B cell (primary cell): ENCODE measurements at regions of chr1 and their contacts with region 1.

Region 1: GRCh38 chr1:107142140-107142542 is 1.3 kb downstream of the NTNG1 start:
- DNase-seq: peak; percentile 57
- ATAC-seq: no peak
- H3K4me3 ChIP-seq: peak overlapping the region; percentile 39 to 75 (median 56)
- H3K4me3 Mint-ChIP-seq: peak overlapping the region; percentile 95
- H3K27ac ChIP-seq: no peak overlapping the region
- H3K27ac Mint-ChIP-seq: no peak overlapping the region
- H3K4me1 ChIP-seq: peaks cover 18 to 20% of the 10 kb centered on the region in 2 donors
- H3K4me1 Mint-ChIP-seq: peaks cover 21% of the 10 kb centered on the region
- H3K27me3 ChIP-seq: peaks cover 0 to 27% (median 18%) of the 10 kb centered on the region in 4 experiments
- H3K27me3 Mint-ChIP-seq: peaks cover 23% of the 10 kb centered on the region
- CTCF ChIP-seq: peak; percentile 96

Region 2: DNA sequence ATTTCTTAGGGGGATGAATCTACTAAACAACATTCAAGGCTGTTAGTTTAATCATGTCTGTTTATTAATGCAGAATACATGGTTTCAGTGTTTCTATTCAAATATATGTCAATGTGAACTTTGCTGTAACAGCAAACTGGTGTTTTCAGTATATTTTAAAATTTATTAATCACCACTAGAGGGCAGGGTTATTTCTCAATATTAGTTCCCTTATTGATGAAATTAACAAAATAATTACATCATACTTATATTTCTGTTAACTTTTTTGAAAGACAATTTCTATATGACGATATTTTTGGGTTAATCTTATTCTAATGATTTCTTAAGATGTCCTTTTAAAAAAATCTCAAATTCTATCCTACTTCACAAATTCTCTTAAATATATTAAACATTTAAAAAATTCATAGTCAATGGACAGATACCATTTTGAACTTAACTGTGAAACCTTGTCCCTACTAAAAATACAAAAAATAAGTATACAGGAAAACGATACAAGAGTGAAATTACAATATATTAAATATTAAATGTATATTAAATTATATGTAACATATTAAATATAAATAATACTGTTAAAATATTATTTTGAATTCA is 1119.7 kb before region 1 on chr1:
- CTCF ChIA-PET with region 1: no interaction called
- POLR2A ChIA-PET with region 1: no interaction called
- intact Hi-C with region 1: loop called (anchors 5 kb)
- DNase-seq: no peak
- ATAC-seq: no peak
- H3K4me3 ChIP-seq: no peak overlapping the region
- H3K4me3 Mint-ChIP-seq: no peak overlapping the region
- H3K27ac ChIP-seq: no peak overlapping the region
- H3K27ac Mint-ChIP-seq: no peak overlapping the region
- H3K4me1 ChIP-seq: no peaks in the 10 kb centered on the region
- H3K4me1 Mint-ChIP-seq: peaks cover 2% of the 10 kb centered on the region
- H3K27me3 ChIP-seq: no peaks in the 10 kb centered on the region
- H3K27me3 Mint-ChIP-seq: no peaks in the 10 kb centered on the region
- CTCF ChIP-seq: peak; percentile 69

Region 3: GRCh38 chr1:106831511-106831910 is 310.6 kb before region 1 on chr1:
- CTCF ChIA-PET with region 1: no interaction called
- POLR2A ChIA-PET with region 1: no interaction called
- intact Hi-C with region 1: no loop called
- DNase-seq: no peak
- ATAC-seq: no peak
- H3K4me3 ChIP-seq: no peak overlapping the region
- H3K4me3 Mint-ChIP-seq: no peak overlapping the region
- H3K27ac ChIP-seq: no peak overlapping the region
- H3K27ac Mint-ChIP-seq: no peak overlapping the region
- H3K4me1 ChIP-seq: no peaks in the 10 kb centered on the region
- H3K4me1 Mint-ChIP-seq: no peaks in the 10 kb centered on the region
- H3K27me3 ChIP-seq: no peaks in the 10 kb centered on the region
- H3K27me3 Mint-ChIP-seq: no peaks in the 10 kb centered on the region
- CTCF ChIP-seq: no peak

Region 4: DNA sequence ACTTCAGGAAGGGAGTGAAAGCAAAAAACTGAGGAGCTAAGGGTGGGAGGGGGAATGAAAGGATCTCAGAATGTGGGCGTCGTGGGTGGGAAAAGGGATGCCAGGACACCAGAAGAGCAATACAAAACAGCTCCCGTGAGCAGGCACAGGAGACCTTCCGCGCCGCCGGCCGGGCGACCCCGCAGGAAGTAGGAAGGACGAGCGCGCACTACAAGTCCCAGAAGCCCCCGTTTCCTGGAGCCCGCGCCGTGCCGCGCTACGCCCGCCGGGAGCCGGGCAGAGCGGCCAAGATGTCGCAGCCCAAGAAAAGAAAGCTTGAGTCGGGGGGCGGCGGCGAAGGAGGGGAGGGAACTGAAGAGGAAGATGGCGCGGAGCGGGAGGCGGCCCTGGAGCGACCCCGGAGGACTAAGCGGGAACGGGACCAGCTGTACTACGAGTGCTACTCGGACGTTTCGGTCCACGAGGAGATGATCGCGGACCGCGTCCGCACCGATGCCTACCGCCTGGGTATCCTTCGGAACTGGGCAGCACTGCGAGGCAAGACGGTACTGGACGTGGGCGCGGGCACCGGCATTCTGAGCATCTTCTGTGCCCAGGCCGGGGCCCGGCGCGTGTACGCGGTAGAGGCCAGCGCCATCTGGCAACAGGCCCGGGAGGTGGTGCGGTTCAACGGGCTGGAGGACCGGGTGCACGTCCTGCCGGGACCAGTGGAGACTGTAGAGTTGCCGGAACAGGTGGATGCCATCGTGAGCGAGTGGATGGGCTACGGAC is 85.5 kb before region 1 on chr1 and contains the start of gene PRMT6:
- CTCF ChIA-PET with region 1: interaction called, 12 read pairs
- POLR2A ChIA-PET with region 1: no interaction called
- intact Hi-C with region 1: loop called (anchors 2 kb)
- DNase-seq: peak; percentile 87
- ATAC-seq: peak; percentile 91
- H3K4me3 ChIP-seq: peak within 1 kb of the TSS; percentile 73 to 100 (median 78)
- H3K4me3 Mint-ChIP-seq: peak within 1 kb of the TSS; percentile 99
- H3K27ac ChIP-seq: peak within 1 kb of the TSS; percentile 79 to 80
- H3K27ac Mint-ChIP-seq: peak within 1 kb of the TSS; percentile 99
- H3K4me1 ChIP-seq: peaks cover 18 to 21% of the 10 kb centered on the region in 2 donors
- H3K4me1 Mint-ChIP-seq: peaks cover 28% of the 10 kb centered on the region
- H3K27me3 ChIP-seq: no peaks in the 10 kb centered on the region
- H3K27me3 Mint-ChIP-seq: no peaks in the 10 kb centered on the region
- CTCF ChIP-seq: peak; percentile 15
- total RNA-seq, gene PRMT6: 21.6 and 23.3 TPM in 2 replicates